ENCODE measurements at regions of chr11 and their contacts with region 1.

Region 1: GRCh38 chr11:104073950-104074705 is 37.7 kb downstream of the DDI1 start:
- DNase-seq: no peak
- ATAC-seq: peak; percentile 85
- H3K4me3 Mint-ChIP-seq: no peak overlapping the region
- H3K27ac Mint-ChIP-seq: no peak overlapping the region
- H3K4me1 Mint-ChIP-seq: peaks cover 26% of the 10 kb centered on the region
- H3K27me3 Mint-ChIP-seq: no peaks in the 10 kb centered on the region
- CTCF ChIP-seq: no peak

Region 2: DNA sequence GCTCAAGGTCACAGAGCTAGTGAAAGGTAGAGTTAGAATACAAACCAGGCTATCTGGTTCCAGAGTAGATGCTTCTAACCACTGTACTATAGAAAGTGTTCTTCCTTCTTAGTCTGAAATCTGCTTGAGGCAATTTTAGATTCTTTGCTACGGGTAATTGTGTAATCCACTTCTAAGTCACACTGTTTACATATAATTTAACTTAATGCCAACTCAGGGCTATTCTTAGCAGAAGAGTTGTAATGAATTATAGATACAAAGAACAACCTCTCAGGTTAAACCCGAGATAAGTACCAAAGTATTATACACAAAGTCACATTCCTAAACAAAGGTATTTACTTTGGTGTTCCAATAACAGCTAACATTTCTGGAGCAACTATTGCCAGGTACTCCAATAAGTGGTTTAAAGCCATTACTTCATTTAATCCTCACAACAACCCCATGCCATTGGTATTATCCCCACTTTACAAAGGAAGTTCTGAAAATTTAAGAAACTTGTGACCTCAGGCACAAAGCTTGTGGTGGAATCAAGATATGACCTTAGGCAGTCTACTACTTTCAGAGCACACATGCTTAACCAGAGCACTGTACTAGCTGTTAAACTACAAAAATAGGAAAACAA is 68.8 kb before region 1 on chr11:
- CTCF ChIA-PET with region 1: no interaction called
- POLR2A ChIA-PET with region 1: no interaction called
- intact Hi-C with region 1: loop called (anchors 5 kb)
- DNase-seq: no peak
- ATAC-seq: no peak
- H3K4me3 Mint-ChIP-seq: no peak overlapping the region
- H3K27ac Mint-ChIP-seq: no peak overlapping the region
- H3K4me1 Mint-ChIP-seq: no peaks in the 10 kb centered on the region
- H3K27me3 Mint-ChIP-seq: no peaks in the 10 kb centered on the region
- CTCF ChIP-seq: no peak

Region 3: DNA sequence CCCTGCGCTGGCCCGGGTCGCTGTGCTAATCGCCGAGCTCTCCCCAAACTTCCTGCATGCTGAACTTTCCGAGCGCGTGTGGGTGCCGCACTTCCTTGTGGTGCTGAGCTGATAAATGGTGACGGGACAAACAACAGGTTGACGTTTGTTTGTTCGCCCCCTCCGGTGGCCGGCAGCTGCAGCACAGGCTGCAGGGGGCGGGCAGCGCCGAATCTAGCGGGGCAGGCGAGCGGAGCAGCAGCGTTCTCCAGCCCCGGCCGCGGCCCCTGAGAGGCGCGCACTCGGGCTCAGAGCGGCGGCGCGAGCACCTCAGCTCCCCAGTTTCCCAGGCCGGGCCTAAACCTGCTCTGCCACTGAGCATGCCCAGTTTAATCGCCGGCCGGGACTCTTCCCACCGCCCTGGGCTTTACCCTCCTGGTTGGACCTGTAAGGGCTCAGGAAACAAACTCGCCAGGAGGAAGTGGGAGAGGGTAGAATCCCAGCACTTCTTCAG is 89.9 kb after region 1 on chr11 and contains the start of gene PDGFD:
- CTCF ChIA-PET with region 1: no interaction called
- POLR2A ChIA-PET with region 1: no interaction called
- intact Hi-C with region 1: no loop called
- DNase-seq: peak; percentile 25
- ATAC-seq: peak; percentile 87
- H3K4me3 Mint-ChIP-seq: peak within 1 kb of the TSS; percentile 84
- H3K27ac Mint-ChIP-seq: no peak within 1 kb of the TSS
- H3K4me1 Mint-ChIP-seq: peaks cover 21% of the 10 kb centered on the region
- H3K27me3 Mint-ChIP-seq: peaks cover 10% of the 10 kb centered on the region
- CTCF ChIP-seq: no peak
- total RNA-seq, gene PDGFD: 0.17 and 0.53 TPM in 2 replicates

Measured in activated B cell treated with CpG ODN at 0.5 μM for 24 hours (primary cell).